ENCODE measurements at regions of chr20 and their contacts with region 1.

Region 1: DNA sequence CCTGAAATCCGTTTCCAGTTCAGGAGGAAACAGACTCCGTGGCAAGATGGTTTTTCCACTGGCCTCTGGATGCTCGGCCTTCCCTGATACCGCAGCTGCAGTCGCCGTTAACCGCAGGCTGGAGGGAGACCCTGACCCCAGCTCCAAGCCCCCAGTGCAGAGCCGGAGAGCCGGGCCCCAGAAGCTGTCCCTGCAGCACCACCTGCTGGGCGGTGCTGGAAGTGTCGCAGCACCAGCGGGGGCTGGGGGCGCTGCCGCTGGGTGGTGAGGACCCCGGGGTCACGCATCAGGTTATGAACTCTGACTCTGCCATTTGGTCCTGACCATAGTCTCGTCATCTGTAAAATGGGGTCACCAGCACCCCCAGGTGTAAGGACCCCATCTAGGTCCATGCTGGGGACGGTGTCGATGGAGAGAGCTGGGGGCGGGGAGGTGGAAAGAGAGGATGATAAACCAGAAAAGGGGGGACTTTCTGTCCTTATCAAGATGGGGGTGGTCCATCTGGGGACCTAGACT is 20.7 kb upstream of the CHRNA4 start:
- DNase-seq: peak in 1 of 2 experiments; percentile 93
- H3K4me3 ChIP-seq: no peak overlapping the region
- H3K27ac ChIP-seq: no peak overlapping the region
- H3K4me1 ChIP-seq: peaks cover 3 to 20% (median 14%) of the 10 kb centered on the region in 4 experiments
- H3K27me3 ChIP-seq: peaks cover 0 to 2% (median 0%) of the 10 kb centered on the region in 4 experiments; a peak in 1 of 7 replicates
- CTCF ChIP-seq: peak; percentile 94 to 98 (median 96)
- EP300 ChIP-seq: no peak
- POLR2A ChIP-seq: no peak
- RAD21 ChIP-seq: peak; percentile 95 to 97

Region 2: DNA sequence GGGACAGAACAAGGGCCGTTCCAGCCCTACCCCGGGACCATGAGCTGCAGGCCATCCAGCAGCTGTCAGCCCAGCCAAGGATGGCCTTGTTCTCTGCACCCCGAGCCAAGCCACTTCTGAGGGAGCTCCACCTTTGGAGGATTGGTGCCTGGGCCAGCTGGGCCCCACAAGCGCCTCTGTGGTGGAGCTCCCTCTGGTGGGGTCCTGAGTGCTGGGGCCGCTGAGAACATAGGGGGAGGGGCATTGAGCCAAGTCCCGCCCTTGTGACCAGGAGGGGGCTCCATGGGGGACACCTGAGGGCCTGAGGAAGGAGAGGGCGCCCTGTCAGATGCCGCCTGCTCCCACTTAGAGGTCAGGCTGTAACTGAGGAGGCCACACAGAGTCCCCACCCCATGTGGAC is 209.1 kb before region 1 on chr20:
- CTCF ChIA-PET with region 1: no interaction called
- POLR2A ChIA-PET with region 1: no interaction called
- DNase-seq: peak in 1 of 2 experiments; percentile 82
- H3K4me3 ChIP-seq: no peak overlapping the region
- H3K27ac ChIP-seq: no peak overlapping the region
- H3K4me1 ChIP-seq: peaks cover 3 to 44% (median 25%) of the 10 kb centered on the region in 4 experiments
- H3K27me3 ChIP-seq: peaks cover 30 to 55% (median 44%) of the 10 kb centered on the region in 4 experiments
- CTCF ChIP-seq: peak; percentile 60 to 82 (median 81)
- EP300 ChIP-seq: no peak
- POLR2A ChIP-seq: no peak
- RAD21 ChIP-seq: peak; percentile 68 to 80

Region 3: GRCh38 chr20:63298731-63299312 is 83.0 kb before region 1 on chr20:
- CTCF ChIA-PET with region 1: interaction called, 13 read pairs
- POLR2A ChIA-PET with region 1: interaction called, 3 read pairs
- DNase-seq: no peak
- H3K4me3 ChIP-seq: no peak overlapping the region
- H3K27ac ChIP-seq: no peak overlapping the region
- H3K4me1 ChIP-seq: peaks cover 0 to 21% (median 19%) of the 10 kb centered on the region in 4 experiments; a peak in 6 of 7 replicates
- H3K27me3 ChIP-seq: peaks cover 0 to 9% (median 4%) of the 10 kb centered on the region in 4 experiments; a peak in 3 of 7 replicates
- CTCF ChIP-seq: no peak
- EP300 ChIP-seq: no peak
- POLR2A ChIP-seq: no peak
- RAD21 ChIP-seq: no peak

Region 4: GRCh38 chr20:63321136-63321831 is 60.6 kb before region 1 on chr20:
- CTCF ChIA-PET with region 1: interaction called, 30 read pairs
- POLR2A ChIA-PET with region 1: no interaction called
- DNase-seq: no peak
- H3K4me3 ChIP-seq: no peak overlapping the region
- H3K27ac ChIP-seq: no peak overlapping the region
- H3K4me1 ChIP-seq: no peaks in the 10 kb centered on the region; a peak in 1 of 7 replicates
- H3K27me3 ChIP-seq: no peaks in the 10 kb centered on the region
- CTCF ChIP-seq: no peak
- EP300 ChIP-seq: no peak
- POLR2A ChIP-seq: no peak
- RAD21 ChIP-seq: no peak

Region 5: GRCh38 chr20:63344616-63345327 is 37.1 kb before region 1 on chr20:
- CTCF ChIA-PET with region 1: interaction called, 33 read pairs
- POLR2A ChIA-PET with region 1: no interaction called
- DNase-seq: no peak
- H3K4me3 ChIP-seq: no peak overlapping the region
- H3K27ac ChIP-seq: no peak overlapping the region
- H3K4me1 ChIP-seq: no peaks in the 10 kb centered on the region; a peak in 2 of 7 replicates
- H3K27me3 ChIP-seq: no peaks in the 10 kb centered on the region
- CTCF ChIP-seq: no peak
- EP300 ChIP-seq: no peak
- POLR2A ChIP-seq: no peak
- RAD21 ChIP-seq: no peak

Region 6: DNA sequence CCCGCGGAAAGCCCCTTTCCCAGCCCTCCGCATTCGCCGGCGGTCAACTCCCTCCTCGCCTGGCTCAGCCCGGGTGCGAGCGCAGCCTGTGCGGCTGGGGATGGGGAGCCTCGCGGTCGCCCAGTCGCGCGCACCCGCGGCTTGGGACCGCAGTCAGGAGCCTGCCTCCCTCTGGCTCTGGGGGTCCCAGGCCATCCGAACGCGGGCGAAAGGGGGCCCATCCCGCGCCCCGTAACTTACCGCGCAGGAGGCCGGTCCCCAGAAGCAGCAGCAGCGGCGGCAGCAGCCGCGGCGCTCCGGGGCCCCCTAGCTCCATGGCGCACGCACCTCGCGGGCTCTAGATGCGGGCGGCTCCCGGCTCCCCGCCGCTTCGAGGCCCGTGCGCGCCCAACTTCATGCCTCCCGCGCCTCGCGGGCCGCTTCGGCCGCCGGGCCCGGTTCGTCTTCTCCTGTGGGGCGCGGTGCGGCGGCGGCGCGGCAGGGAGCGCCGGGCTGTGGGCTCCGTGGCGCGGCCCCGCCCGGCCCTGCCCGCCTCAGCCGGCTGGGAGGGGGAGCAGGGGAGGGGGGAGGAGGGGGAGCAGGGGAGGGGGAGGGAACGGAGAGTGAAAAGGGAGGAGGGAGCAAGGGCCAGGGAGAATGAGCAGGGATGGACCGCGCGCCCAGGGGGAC is 20.9 kb before region 1 on chr20 and contains the start of gene CHRNA4:
- CTCF ChIA-PET with region 1: interaction called, 85 read pairs
- POLR2A ChIA-PET with region 1: interaction called, 9 read pairs
- DNase-seq: peak in 1 of 2 experiments; percentile 79
- H3K4me3 ChIP-seq: peak within 1 kb of the TSS; percentile 50 to 73 (median 52)
- H3K27ac ChIP-seq: no peak within 1 kb of the TSS
- H3K4me1 ChIP-seq: peaks cover 0 to 21% (median 15%) of the 10 kb centered on the region in 4 experiments; a peak in 6 of 7 replicates
- H3K27me3 ChIP-seq: peaks cover 0 to 29% (median 18%) of the 10 kb centered on the region in 4 experiments; a peak in 6 of 7 replicates
- CTCF ChIP-seq: no peak
- EP300 ChIP-seq: no peak
- POLR2A ChIP-seq: no peak
- RAD21 ChIP-seq: no peak
- total RNA-seq, gene CHRNA4: 2.7 and 5.7 TPM in 2 replicates

Region 7: GRCh38 chr20:63394069-63394919 is 12.4 kb after region 1 on chr20:
- CTCF ChIA-PET with region 1: interaction called, 67 read pairs
- POLR2A ChIA-PET with region 1: interaction called, 7 read pairs
- DNase-seq: peak in 1 of 2 experiments; percentile 41
- H3K4me3 ChIP-seq: peak overlapping the region in 1 of 4 experiments; percentile 12; a peak in 3 of 8 replicates
- H3K27ac ChIP-seq: no peak overlapping the region
- H3K4me1 ChIP-seq: peaks cover 0 to 19% (median 18%) of the 10 kb centered on the region in 4 experiments; a peak in 6 of 7 replicates
- H3K27me3 ChIP-seq: peaks cover 0 to 3% (median 0%) of the 10 kb centered on the region in 4 experiments; a peak in 1 of 7 replicates
- CTCF ChIP-seq: no peak
- EP300 ChIP-seq: no peak
- POLR2A ChIP-seq: no peak
- RAD21 ChIP-seq: no peak